GM23248 (cell line): ENCODE measurements at regions of chr7 and their contacts with region 1.

Region 1: DNA sequence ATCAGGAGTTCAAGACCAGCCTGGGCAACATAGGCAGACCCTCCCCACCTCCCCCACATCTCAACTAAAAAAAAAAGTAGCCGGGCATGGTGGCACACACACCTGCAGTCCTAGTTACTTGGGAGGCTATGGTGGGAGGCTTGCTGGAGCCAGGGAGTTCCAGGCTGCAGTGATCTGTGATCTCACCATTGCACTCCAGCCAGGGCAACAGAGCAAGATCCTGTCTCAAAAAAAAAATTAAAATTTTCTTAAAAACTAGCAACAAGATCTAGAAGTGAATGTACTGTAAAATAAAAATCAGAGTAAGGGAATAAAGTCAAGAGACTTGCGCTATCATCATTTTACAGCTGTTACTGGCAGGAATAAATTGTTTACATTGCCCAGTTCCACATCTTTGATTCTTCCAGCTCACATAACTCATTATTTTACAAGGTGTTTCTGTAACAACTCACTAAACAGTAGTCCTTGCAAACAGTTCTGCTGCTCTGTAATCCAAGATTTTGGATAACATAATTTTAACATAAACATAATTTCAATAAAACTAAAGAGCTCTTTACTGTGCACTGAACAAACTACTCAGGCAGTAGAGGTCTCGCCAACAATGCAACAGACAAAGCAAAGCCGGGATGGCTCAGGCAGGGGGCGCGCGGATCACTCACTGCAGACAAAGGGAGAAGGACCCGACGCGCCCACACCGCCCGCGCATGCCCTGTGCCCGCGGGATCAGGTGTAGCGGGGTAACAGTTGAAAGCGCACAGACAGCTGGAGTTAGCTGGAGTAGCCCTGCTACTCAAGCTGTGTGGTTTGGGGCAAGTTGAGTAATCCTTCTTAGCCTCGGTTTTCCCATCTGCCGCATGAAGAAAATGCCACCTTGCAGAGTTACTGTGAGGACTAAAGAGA is 73.3 kb upstream of the NFE2L3 start:
- DNase-seq: peak; percentile 29
- H3K4me3 ChIP-seq: no peak overlapping the region
- H3K27ac ChIP-seq: no peak overlapping the region
- H3K4me1 ChIP-seq: no peaks in the 10 kb centered on the region
- H3K27me3 ChIP-seq: peaks cover 39% of the 10 kb centered on the region

Region 2: DNA sequence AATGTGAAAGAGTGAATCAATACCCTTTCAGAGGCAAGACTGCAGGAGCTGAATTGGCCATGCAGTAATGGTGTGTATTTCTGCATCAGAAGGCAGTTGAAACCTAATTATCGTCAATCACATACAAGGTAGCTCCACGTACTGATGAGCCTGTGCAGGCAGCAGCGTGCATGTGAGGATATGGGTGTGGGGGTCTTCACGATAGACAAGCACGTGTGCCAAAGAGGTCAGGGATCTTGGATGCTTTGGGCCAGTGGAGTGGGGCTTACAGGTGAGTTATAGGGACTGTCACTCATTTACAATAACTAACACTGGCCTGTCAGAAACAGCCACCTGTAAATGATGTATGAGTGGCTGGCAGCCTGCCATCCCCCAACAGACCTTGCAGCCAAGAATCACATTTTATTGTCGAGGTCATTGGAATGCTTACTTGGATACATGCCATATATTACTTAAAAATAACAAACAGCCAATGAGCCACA is 574.8 kb after region 1 on chr7:
- in situ Hi-C with region 1: loop called (anchors 10 kb)
- DNase-seq: no peak
- H3K4me3 ChIP-seq: no peak overlapping the region
- H3K27ac ChIP-seq: no peak overlapping the region
- H3K4me1 ChIP-seq: peaks cover 4% of the 10 kb centered on the region
- H3K27me3 ChIP-seq: no peaks in the 10 kb centered on the region